MCF 10A (cell line): ENCODE measurements at regions of chr20 and their contacts with region 1.

Region 1: DNA sequence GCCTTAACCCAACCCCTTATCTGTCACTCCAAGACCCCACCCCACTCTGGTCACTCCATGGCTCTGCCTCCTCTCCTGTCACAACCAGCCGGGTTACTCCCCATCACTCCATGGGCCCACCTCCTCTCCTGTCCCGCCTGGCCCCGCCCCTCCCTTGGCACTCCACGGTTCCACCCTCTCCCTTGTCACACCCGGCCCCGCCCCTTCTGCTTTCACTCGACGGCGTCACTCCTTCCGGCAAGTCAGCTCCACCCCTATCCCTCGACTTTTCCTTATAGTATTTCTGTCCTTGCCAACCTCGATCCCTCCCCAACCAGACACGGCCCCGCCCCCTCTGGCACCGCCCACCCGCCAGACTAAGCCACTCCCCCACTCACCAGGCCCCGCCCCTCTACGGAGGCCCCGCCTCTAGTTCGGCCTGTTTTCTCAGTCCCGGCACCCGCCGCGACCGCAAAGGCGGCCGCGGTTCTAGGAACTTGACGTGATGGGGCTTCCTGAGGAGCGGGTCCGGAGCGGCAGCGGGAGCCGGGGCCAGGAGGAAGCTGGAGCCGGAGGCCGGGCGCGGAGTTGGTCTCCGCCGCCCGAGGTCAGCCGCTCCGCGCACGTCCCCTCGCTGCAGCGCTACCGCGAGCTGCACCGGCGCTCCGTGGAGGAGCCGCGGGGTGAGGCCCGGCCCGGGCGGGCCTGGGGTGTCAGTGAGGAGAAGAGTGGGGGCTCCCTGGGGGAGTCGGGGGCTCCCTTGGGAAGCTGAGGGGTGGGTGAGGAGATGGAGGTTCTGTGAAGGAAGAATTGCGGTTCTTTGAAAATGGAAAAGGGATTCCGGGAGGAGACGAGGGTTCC is at the start of gene ACSS2:
- DNase-seq: peak; percentile 100
- H3K4me3 Mint-ChIP-seq: peak within 1 kb of the TSS; percentile 99
- H3K27ac Mint-ChIP-seq: peak within 1 kb of the TSS; percentile 91
- H3K4me1 Mint-ChIP-seq: peaks cover 51% of the 10 kb centered on the region
- H3K27me3 Mint-ChIP-seq: no peaks in the 10 kb centered on the region
- CTCF ChIP-seq: no peak
- total RNA-seq, gene ACSS2: 36.6 and 42.0 TPM in 2 replicates

Region 2: DNA sequence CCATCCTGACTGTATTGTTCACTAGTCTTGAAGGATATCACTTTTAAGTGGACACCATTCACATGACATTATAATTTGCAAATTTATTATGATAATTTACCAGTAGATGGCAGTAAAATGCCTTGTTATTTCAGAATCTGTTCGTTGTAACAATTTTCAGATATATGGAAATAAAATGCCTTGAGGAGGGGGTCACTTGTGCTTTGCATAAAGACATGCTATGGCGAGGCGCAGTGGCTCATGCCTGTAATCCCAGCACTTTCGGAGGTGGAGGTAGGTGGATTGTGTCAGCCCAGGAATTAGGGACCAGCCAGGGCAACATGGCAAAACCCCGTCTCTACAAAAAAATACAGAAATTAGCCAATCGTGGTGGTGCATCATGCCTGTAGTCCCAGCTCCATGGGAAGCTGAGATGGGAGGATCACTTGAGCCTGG is 41.9 kb before region 1 on chr20:
- CTCF ChIA-PET with region 1: interaction called, 36 read pairs
- POLR2A ChIA-PET with region 1: interaction called, 4 read pairs
- intact Hi-C with region 1: no loop called
- DNase-seq: peak; percentile 46
- H3K4me3 Mint-ChIP-seq: no peak overlapping the region
- H3K27ac Mint-ChIP-seq: no peak overlapping the region
- H3K4me1 Mint-ChIP-seq: no peaks in the 10 kb centered on the region
- H3K27me3 Mint-ChIP-seq: peaks cover 56% of the 10 kb centered on the region
- CTCF ChIP-seq: peak; percentile 42

Region 3: GRCh38 chr20:34891166-34892062 is 15.0 kb after region 1 on chr20:
- CTCF ChIA-PET with region 1: interaction called, 11 read pairs
- POLR2A ChIA-PET with region 1: interaction called, 42 read pairs
- intact Hi-C with region 1: no loop called
- DNase-seq: peak; percentile 79
- H3K4me3 Mint-ChIP-seq: no peak overlapping the region
- H3K27ac Mint-ChIP-seq: peak overlapping the region; percentile 69
- H3K4me1 Mint-ChIP-seq: peaks cover 44% of the 10 kb centered on the region
- H3K27me3 Mint-ChIP-seq: no peaks in the 10 kb centered on the region
- CTCF ChIP-seq: no peak

Region 4: DNA sequence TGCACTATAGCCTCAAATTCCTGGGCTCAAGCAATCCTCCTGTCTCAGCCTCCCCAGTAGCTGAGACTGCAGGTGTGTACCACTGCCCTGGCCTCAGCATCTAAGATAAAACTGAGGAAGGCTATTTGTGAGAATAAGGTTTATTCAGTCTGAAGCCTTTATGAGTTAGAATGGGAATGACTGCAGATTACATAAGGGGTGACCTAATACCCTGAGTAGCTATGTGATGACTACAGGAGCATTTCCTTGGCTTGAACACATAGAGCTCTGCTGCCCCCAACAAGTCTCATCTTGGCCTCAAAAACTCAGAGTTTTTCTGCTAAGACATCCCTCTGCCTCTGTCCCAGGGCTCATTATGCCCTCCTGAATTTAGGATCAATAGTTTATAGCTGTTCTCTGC is 71.6 kb after region 1 on chr20:
- CTCF ChIA-PET with region 1: interaction called, 279 read pairs
- POLR2A ChIA-PET with region 1: interaction called, 32 read pairs
- intact Hi-C with region 1: loop called (anchors 1 kb)
- DNase-seq: peak; percentile 27
- H3K4me3 Mint-ChIP-seq: no peak overlapping the region
- H3K27ac Mint-ChIP-seq: no peak overlapping the region
- H3K4me1 Mint-ChIP-seq: peaks cover 31% of the 10 kb centered on the region
- H3K27me3 Mint-ChIP-seq: no peaks in the 10 kb centered on the region
- CTCF ChIP-seq: no peak

Region 5: DNA sequence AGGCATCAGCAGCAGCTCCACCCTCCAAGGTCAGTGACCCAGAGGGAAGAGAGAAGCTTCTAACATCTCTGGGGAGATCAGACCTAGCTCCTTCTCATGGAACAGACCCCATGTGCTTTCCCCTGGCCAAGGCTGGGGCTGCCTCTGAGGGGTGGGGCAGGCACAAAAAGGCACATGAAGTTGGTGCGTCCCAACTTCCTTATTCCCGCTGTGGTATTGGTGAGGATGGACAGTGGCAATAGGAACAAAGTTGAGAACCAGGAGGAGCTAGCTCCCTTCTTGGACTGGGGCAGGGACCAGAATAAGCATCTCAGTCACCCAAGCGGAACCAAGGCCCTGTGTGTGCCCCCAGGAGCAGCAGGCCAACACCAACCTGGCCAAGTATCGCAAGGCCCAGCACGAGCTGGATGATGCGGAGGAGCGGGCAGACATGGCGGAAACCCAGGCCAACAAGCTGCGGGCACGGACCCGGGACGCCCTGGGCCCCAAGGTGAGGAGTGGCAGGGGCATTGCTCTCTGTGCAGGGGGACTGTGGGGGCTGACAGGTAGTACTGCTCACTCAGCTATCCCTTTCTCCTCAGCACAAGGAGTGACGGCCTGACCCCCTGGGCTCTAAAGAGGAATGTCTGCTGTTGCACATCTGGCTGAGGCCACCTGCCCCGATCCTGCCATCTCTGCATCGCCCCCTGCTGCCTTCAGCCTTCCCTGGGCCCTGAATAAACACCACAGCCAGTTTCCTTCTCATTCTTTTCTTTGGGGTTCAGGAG is 125.4 kb after region 1 on chr20:
- CTCF ChIA-PET with region 1: interaction called, 28 read pairs
- POLR2A ChIA-PET with region 1: interaction called, 5 read pairs
- intact Hi-C with region 1: no loop called
- DNase-seq: no peak
- H3K4me3 Mint-ChIP-seq: no peak overlapping the region
- H3K27ac Mint-ChIP-seq: no peak overlapping the region
- H3K4me1 Mint-ChIP-seq: no peaks in the 10 kb centered on the region
- H3K27me3 Mint-ChIP-seq: no peaks in the 10 kb centered on the region
- CTCF ChIP-seq: peak; percentile 16

Region 6: GRCh38 chr20:35171753-35172433 is 295.5 kb after region 1 on chr20 and contains the start of gene PROCR:
- CTCF ChIA-PET with region 1: no interaction called
- POLR2A ChIA-PET with region 1: no interaction called
- intact Hi-C with region 1: no loop called
- DNase-seq: peak; percentile 99
- H3K4me3 Mint-ChIP-seq: peak within 1 kb of the TSS; percentile 82
- H3K27ac Mint-ChIP-seq: peak within 1 kb of the TSS; percentile 77
- H3K4me1 Mint-ChIP-seq: peaks cover 26% of the 10 kb centered on the region
- H3K27me3 Mint-ChIP-seq: no peaks in the 10 kb centered on the region
- CTCF ChIP-seq: no peak
- total RNA-seq, gene PROCR: 27.4 and 34.6 TPM in 2 replicates

Region 7: GRCh38 chr20:35226126-35226774 is 349.9 kb after region 1 on chr20 and contains the start of gene MMP24:
- CTCF ChIA-PET with region 1: no interaction called
- POLR2A ChIA-PET with region 1: no interaction called
- intact Hi-C with region 1: no loop called
- DNase-seq: no peak
- H3K4me3 Mint-ChIP-seq: peak within 1 kb of the TSS; percentile 54
- H3K27ac Mint-ChIP-seq: no peak within 1 kb of the TSS
- H3K4me1 Mint-ChIP-seq: no peaks in the 10 kb centered on the region
- H3K27me3 Mint-ChIP-seq: peaks cover 60% of the 10 kb centered on the region
- CTCF ChIP-seq: no peak
- total RNA-seq, gene MMP24: 0.10 TPM in 1 of 2 replicates, not detected in the other